CD8-positive, alpha-beta T cell (primary cell): ENCODE measurements at regions of chr22 and their contacts with region 1.

Region 1: GRCh38 chr22:24325105-24325757 is 54.6 kb downstream of the SPECC1L start:
- DNase-seq: peak in 3 of 9 experiments; percentile 6 to 72 (median 62)
- ATAC-seq: peak; percentile 55
- H3K4me3 ChIP-seq: no peak overlapping the region
- H3K4me3 Mint-ChIP-seq: no peak overlapping the region
- H3K27ac ChIP-seq: no peak overlapping the region
- H3K27ac Mint-ChIP-seq: no peak overlapping the region
- H3K4me1 ChIP-seq: peaks cover 14% of the 10 kb centered on the region
- H3K4me1 Mint-ChIP-seq: peaks cover 23% of the 10 kb centered on the region
- H3K27me3 ChIP-seq: no peaks in the 10 kb centered on the region
- H3K27me3 Mint-ChIP-seq: no peaks in the 10 kb centered on the region
- CTCF ChIP-seq: peak; percentile 71

Region 2: GRCh38 chr22:24225951-24226350 is 99.3 kb before region 1 on chr22:
- CTCF ChIA-PET with region 1: no interaction called
- POLR2A ChIA-PET with region 1: no interaction called
- intact Hi-C with region 1: no loop called
- DNase-seq: no peak
- ATAC-seq: no peak
- H3K4me3 ChIP-seq: no peak overlapping the region
- H3K4me3 Mint-ChIP-seq: no peak overlapping the region
- H3K27ac ChIP-seq: no peak overlapping the region
- H3K27ac Mint-ChIP-seq: no peak overlapping the region
- H3K4me1 ChIP-seq: no peaks in the 10 kb centered on the region
- H3K4me1 Mint-ChIP-seq: no peaks in the 10 kb centered on the region
- H3K27me3 ChIP-seq: no peaks in the 10 kb centered on the region
- H3K27me3 Mint-ChIP-seq: no peaks in the 10 kb centered on the region
- CTCF ChIP-seq: no peak

Region 3: GRCh38 chr22:24486501-24486921 is 161.3 kb after region 1 on chr22:
- CTCF ChIA-PET with region 1: no interaction called
- POLR2A ChIA-PET with region 1: no interaction called
- intact Hi-C with region 1: loop called in 1 of 2 experiments (anchors 1 kb)
- DNase-seq: no peak
- ATAC-seq: no peak
- H3K4me3 ChIP-seq: no peak overlapping the region
- H3K4me3 Mint-ChIP-seq: no peak overlapping the region
- H3K27ac ChIP-seq: no peak overlapping the region
- H3K27ac Mint-ChIP-seq: no peak overlapping the region
- H3K4me1 ChIP-seq: no peaks in the 10 kb centered on the region
- H3K4me1 Mint-ChIP-seq: peaks cover 8% of the 10 kb centered on the region
- H3K27me3 ChIP-seq: no peaks in the 10 kb centered on the region
- H3K27me3 Mint-ChIP-seq: no peaks in the 10 kb centered on the region
- CTCF ChIP-seq: no peak

Region 4: GRCh38 chr22:24503137-24503842 is 178.1 kb after region 1 on chr22:
- CTCF ChIA-PET with region 1: interaction called, 6 read pairs
- POLR2A ChIA-PET with region 1: no interaction called
- intact Hi-C with region 1: loop called (anchors 1 to 5 kb)
- DNase-seq: peak; percentile 28 to 79 (median 66)
- ATAC-seq: peak; percentile 88
- H3K4me3 ChIP-seq: no peak overlapping the region
- H3K4me3 Mint-ChIP-seq: no peak overlapping the region
- H3K27ac ChIP-seq: no peak overlapping the region
- H3K27ac Mint-ChIP-seq: no peak overlapping the region
- H3K4me1 ChIP-seq: peaks cover 6% of the 10 kb centered on the region
- H3K4me1 Mint-ChIP-seq: peaks cover 9% of the 10 kb centered on the region
- H3K27me3 ChIP-seq: no peaks in the 10 kb centered on the region
- H3K27me3 Mint-ChIP-seq: no peaks in the 10 kb centered on the region
- CTCF ChIP-seq: peak; percentile 57

Region 5: GRCh38 chr22:24525416-24526037 is 200.3 kb after region 1 on chr22:
- CTCF ChIA-PET with region 1: interaction called, 7 read pairs
- POLR2A ChIA-PET with region 1: interaction called, 3 read pairs
- intact Hi-C with region 1: loop called (anchors 1 kb)
- DNase-seq: peak; percentile 58 to 85 (median 72)
- ATAC-seq: peak; percentile 96
- H3K4me3 ChIP-seq: no peak overlapping the region
- H3K4me3 Mint-ChIP-seq: no peak overlapping the region
- H3K27ac ChIP-seq: no peak overlapping the region
- H3K27ac Mint-ChIP-seq: no peak overlapping the region
- H3K4me1 ChIP-seq: no peaks in the 10 kb centered on the region
- H3K4me1 Mint-ChIP-seq: peaks cover 9% of the 10 kb centered on the region
- H3K27me3 ChIP-seq: no peaks in the 10 kb centered on the region
- H3K27me3 Mint-ChIP-seq: no peaks in the 10 kb centered on the region
- CTCF ChIP-seq: peak; percentile 92

Region 6: DNA sequence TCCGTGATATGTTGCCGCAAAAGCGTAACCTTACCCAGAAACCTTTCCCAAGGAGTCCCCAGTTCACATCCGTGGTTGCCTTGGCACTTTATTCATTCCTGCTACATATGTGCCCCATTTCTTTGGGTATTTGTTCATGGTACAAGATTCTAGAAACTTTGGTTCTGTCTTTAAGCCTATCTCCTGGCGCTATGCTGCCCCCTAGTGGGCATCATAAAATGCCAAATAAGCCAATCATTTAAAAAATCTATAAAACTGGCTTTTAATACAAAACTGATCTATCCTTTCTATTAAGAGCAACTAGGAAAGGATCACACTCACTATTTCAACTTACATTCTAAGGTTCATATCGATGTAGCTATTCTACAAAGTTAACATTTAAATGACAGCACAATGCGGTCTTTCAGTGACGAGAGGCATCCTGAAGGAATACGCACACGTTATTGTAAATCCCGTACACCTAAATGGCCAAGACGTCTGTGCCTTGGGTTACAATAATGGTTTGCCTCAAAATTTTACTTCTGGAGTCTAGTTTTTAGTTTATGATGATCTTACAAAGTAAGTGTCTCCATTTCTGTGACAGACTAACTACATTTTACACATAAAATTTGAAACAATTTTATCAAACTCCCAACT is 433.1 kb after region 1 on chr22:
- CTCF ChIA-PET with region 1: interaction called, 3 read pairs
- POLR2A ChIA-PET with region 1: no interaction called
- intact Hi-C with region 1: loop called in 1 of 2 experiments (anchors 2 kb)
- DNase-seq: peak; percentile 7 to 71 (median 56)
- ATAC-seq: no peak
- H3K4me3 ChIP-seq: no peak overlapping the region
- H3K4me3 Mint-ChIP-seq: no peak overlapping the region
- H3K27ac ChIP-seq: no peak overlapping the region
- H3K27ac Mint-ChIP-seq: no peak overlapping the region
- H3K4me1 ChIP-seq: no peaks in the 10 kb centered on the region
- H3K4me1 Mint-ChIP-seq: no peaks in the 10 kb centered on the region
- H3K27me3 ChIP-seq: no peaks in the 10 kb centered on the region
- H3K27me3 Mint-ChIP-seq: no peaks in the 10 kb centered on the region
- CTCF ChIP-seq: peak; percentile 90